Head of caudate nucleus (tissue), 42 donors: ENCODE measurements at regions of chr3 and their contacts with region 1.

Region 1: GRCh38 chr3:61358364-61358763 is 107.1 kb upstream of the FHIT start:
- DNase-seq: peak; percentile 32 to 90 (median 82)

Region 2: GRCh38 chr3:61251174-61251972 is 107.0 kb before region 1 on chr3 and contains the start of gene FHIT:
- intact Hi-C with region 1: loop called (anchors 10 kb)
- DNase-seq: peak; percentile 94 to 99 (median 98)

Region 3: DNA sequence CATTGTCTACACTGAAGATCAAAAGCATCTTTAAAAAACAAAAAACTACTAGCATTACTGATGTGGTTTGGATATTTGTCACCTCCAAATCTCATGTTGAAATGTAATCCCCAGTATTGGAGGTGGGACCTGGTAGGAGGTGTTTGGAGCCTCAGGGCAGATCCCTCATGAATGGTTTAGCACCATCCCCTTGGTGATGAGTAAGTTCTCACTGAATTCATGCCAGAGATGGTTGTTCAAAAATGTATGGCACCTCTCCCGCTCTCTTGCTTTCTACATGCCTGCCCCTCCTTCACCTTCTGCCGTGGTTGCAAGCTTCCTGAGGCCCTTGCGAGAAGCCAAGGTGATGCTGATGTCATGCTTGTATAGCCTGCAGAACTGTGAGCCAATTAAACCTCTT is 29.5 kb after region 1 on chr3:
- intact Hi-C with region 1: no loop called
- DNase-seq: no peak

Region 4: DNA sequence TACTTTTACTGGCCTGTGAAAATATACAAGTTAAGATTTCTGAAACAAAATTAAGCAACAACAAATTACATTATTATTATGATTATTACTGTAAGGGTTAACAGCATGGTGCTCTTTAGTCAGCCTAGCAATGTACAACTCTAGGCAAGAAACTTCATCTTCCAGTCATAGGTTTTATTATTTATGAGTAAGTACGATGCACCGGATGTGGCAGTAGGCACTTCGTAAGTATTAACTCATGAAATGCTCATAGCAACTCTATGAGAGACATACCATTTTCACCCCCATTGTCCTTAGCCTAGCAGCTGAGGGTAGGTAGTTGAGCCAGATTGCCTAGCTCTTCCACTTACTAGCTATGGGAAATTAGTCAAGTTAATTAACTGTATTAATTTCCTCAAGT is 135.0 kb after region 1 on chr3:
- intact Hi-C with region 1: no loop called
- DNase-seq: no peak